Activated CD4-positive, alpha-beta T cell treated with anti-CD3 and anti-CD28 coated beads, Interleukin-2, amount 10 ng/mL, durations not matched to agents 24 days and 14 days (primary cell): ENCODE measurements at regions of chr11 and their contacts with region 1.

Region 1: DNA sequence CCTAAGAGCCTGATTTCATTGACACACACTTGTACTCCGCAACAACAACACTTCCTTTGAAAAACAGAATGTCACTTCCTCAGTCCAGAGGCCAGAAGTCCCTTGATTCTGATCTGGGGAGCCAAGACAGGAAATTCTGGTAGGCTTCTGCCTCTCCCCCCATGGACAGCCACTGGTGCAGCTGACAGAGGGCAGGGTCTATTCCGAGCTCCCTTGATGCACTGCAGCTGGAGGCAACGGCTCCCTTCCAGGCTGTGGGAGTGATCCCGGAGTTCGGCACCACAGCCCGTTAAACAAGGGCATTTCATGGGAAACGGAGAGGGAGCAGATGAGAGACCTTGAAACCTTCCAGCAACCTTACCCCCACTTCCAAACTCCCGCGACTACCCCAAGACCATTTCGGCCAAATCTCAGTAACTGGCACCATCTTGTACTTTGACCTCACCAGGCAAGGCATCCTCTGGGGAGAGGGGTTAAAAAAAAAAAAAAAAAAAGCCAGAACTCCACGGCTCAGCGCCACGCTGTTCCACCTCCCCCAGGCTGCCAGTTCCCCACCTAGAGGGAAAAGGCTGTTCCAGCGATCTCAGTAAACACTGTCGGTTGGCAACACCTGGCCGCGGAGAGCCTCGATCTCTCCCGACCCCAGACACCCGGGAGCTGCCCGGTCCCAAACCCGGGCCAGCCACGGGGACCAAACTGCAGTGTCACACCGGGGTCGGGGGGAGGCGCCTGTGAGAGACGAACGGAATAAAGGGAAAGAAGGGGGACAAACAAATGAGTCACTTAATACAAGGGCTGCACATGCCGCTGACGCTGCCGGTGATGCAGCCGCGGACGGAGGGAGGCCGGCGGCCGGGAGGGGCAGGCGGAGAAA is 1.1 kb downstream of the GAB2 start:
- DNase-seq: peak; percentile 95
- H3K4me3 Mint-ChIP-seq: peak overlapping the region; percentile 98
- H3K27ac Mint-ChIP-seq: peak overlapping the region; percentile 95
- H3K4me1 Mint-ChIP-seq: peaks cover 57% of the 10 kb centered on the region
- H3K27me3 Mint-ChIP-seq: peaks cover 11% of the 10 kb centered on the region

Region 2: GRCh38 chr11:77994412-77995362 is 421.9 kb before region 1 on chr11 and contains the start of gene INTS4:
- intact Hi-C with region 1: loop called (anchors 2 kb)
- DNase-seq: peak; percentile 99
- H3K4me3 Mint-ChIP-seq: peak within 1 kb of the TSS; percentile 97
- H3K27ac Mint-ChIP-seq: peak within 1 kb of the TSS; percentile 92
- H3K4me1 Mint-ChIP-seq: peaks cover 21% of the 10 kb centered on the region
- H3K27me3 Mint-ChIP-seq: peaks cover 2% of the 10 kb centered on the region
- total RNA-seq, gene INTS4: 60.0 and 60.8 TPM in 2 replicates

Region 3: DNA sequence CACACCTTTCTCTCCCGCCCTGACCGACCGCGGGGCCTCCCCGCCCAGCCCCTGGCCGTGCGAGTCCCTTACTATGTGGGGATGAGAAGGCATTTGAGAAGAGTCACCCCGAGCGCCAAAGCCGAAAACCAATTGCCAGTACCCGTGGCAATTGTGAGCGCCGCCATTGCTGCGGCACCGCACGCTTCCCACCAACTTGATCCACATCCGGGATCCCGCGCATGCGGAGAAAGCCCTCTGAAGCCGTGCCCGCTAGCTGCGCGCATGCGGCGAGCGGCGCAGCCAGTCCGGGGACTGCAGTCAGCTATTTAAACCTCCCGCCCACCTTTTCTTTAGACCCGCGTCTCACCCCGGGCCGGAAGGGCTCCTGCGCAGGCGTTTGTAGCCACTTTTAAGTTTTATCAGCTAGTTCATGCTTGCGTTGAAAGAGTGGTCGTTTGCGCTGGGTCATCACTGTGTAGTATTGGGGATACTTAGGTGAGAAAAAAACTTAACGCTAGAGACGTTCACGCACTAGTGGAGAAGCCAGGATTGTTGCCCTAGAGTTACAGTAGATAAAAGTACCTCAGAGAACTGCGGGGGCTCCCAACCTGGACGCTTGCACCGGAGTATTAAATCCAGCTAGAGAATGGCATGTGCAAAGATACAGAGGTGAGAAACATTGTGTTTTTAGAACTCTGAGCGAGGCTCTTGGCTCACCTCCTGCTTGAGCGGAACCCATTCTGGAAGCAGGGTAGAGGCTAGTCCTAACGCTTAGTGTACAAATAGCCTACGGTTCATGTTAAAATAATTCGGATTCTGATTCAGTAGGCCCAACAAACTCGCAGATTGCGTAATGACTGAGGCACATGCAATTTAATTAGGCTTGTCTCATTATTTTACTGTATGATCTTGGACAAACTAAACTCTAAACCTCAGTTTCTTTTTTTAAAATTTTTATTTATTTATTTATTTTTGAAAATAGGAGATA is 276.8 kb before region 1 on chr11 and contains the start of gene ALG8:
- intact Hi-C with region 1: loop called (anchors 5 kb)
- DNase-seq: peak; percentile 99
- H3K4me3 Mint-ChIP-seq: peak within 1 kb of the TSS; percentile 86
- H3K27ac Mint-ChIP-seq: peak within 1 kb of the TSS; percentile 95
- H3K4me1 Mint-ChIP-seq: peaks cover 43% of the 10 kb centered on the region
- H3K27me3 Mint-ChIP-seq: no peaks in the 10 kb centered on the region
- total RNA-seq, gene ALG8: 60.9 and 61.7 TPM in 2 replicates

Region 4: GRCh38 chr11:78290293-78291176 is 126.0 kb before region 1 on chr11:
- intact Hi-C with region 1: loop called (anchors 2 kb)
- DNase-seq: peak; percentile 85
- H3K4me3 Mint-ChIP-seq: peak overlapping the region; percentile 72
- H3K27ac Mint-ChIP-seq: peak overlapping the region; percentile 84
- H3K4me1 Mint-ChIP-seq: peaks cover 50% of the 10 kb centered on the region
- H3K27me3 Mint-ChIP-seq: no peaks in the 10 kb centered on the region

Region 5: DNA sequence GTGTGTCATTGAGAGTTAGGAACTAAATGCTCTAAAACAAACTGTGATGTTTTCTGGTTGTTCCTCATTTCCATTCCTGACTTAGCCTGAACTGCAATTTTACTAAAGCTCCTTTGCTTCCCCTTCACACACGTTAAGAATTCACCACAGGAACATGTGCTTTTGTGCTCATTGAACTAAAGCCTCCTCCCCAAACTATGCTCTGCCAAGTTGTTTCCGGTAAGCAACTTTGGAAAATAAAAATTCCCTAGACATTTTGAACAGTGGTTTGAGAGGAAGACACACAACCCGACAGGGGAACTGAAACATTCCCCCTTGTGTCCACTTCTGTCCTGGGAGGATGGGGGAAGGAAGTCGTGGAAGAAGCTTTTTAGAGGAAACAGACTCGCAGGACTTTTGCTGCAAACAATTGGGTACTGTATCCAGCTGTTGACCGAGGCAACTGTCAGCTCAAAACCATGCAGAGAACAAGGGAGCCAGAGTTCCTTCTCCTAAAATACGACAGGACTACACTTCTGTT is 65.8 kb before region 1 on chr11:
- intact Hi-C with region 1: loop called (anchors 5 kb)
- DNase-seq: no peak
- H3K4me3 Mint-ChIP-seq: peak overlapping the region; percentile 82
- H3K27ac Mint-ChIP-seq: peak overlapping the region; percentile 82
- H3K4me1 Mint-ChIP-seq: peaks cover 62% of the 10 kb centered on the region
- H3K27me3 Mint-ChIP-seq: no peaks in the 10 kb centered on the region

Region 6: DNA sequence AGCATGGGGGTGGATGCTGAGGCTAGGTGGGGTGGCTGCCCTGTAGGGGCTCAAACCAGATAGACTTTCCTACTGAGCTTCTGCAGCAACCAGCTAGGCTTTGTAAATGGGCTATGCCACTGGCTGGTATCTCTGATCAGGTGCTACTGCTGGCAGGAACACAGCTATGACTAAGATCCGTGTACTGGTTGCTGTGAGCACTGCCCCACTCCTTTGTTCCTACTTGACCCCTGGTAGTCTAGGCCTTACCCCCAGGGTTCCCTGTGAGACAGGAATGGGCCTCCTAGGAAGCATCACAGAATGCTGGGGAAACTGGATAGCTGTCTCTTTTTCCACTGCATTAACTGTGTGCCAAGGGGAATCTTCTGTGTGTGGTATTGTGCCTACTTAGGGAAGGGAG is 59.5 kb after region 1 on chr11:
- intact Hi-C with region 1: no loop called
- DNase-seq: no peak
- H3K4me3 Mint-ChIP-seq: no peak overlapping the region
- H3K27ac Mint-ChIP-seq: no peak overlapping the region
- H3K4me1 Mint-ChIP-seq: peaks cover 3% of the 10 kb centered on the region
- H3K27me3 Mint-ChIP-seq: no peaks in the 10 kb centered on the region

Region 7: DNA sequence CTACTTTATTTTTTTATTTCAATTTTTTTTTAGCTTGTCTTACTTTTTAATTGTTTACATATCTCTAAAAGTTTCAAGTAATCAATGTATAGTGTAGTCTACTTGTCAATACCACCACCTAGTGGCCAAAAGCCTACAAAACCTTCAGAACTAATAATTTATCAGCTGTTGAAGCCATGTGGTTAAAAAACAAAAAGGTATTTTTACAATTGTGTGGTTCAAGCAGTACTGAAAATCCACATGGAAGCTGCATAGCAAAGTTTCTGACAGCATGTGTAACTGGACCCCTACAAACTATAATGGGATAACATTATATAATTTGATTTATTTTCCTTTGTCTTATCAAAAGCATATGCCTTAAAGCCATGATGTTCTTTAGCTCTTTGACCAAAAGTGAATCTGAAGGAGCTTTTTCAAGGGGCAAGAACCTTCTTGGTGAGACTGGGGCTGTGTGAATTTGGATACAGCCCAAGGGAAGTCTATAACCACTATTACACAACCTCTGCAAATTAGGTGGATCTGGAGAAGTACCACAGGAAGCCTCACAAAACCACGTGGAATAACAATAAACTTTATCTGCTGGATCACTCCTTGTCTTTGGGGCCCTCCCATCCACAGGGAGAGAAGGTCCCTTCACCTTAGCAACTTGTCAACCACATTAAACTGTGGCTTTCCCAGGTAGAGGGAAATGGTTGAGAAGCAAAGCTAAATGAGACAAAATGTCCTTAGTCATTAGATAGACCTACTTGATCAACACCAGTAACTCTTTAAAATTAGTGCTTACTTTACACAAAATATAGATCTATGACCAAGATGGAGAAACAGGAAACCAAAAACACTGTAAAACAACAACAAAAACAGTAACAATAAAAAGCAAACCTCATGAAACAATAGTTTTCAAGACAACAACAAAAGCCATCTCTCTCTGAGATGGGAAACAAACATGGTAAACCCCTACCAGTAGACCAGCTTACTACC is 148.2 kb after region 1 on chr11:
- intact Hi-C with region 1: loop called (anchors 1 kb)
- DNase-seq: peak; percentile 89
- H3K4me3 Mint-ChIP-seq: no peak overlapping the region
- H3K27ac Mint-ChIP-seq: peak overlapping the region; percentile 5
- H3K4me1 Mint-ChIP-seq: peaks cover 42% of the 10 kb centered on the region
- H3K27me3 Mint-ChIP-seq: no peaks in the 10 kb centered on the region